Psoas muscle (tissue), 8 donors: ENCODE measurements at regions of chr10 and their contacts with region 1.

Region 1: DNA sequence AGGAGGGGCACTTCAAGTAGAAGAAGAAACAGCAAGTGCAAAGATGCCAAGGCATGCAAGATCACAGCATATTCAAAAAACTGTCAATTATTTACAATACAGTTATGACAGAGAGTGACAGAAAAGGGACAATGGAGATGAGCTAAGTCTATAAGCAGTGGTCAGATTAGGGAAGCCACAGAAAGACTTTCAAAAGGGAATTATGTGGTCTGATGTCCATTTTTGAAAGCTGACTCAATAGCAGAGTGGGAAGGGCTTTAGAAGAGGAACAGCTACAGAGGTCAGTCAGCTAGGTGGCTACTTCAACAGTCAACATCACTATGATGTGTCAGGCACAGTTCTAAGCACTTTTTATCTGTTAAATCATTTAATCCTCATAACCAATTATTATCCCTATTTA is 45.2 kb upstream of the SPOCK2 start:
- DNase-seq: no peak
- ATAC-seq: peak in 2 of 4 donors; percentile 34 to 49
- H3K4me3 ChIP-seq: no peak overlapping the region
- H3K27ac ChIP-seq: peak overlapping the region; percentile 9
- H3K4me1 ChIP-seq: peaks cover 12% of the 10 kb centered on the region
- H3K27me3 ChIP-seq: no peaks in the 10 kb centered on the region
- CTCF ChIP-seq: no peak

Region 2: GRCh38 chr10:72337020-72337629 is 203.6 kb after region 1 on chr10:
- intact Hi-C with region 1: loop called (anchors 2 to 5 kb)
- DNase-seq: peak; percentile 87 to 93
- ATAC-seq: peak; percentile 15 to 59 (median 38)
- H3K4me3 ChIP-seq: no peak overlapping the region
- H3K27ac ChIP-seq: peak overlapping the region; percentile 96
- H3K4me1 ChIP-seq: peaks cover 55% of the 10 kb centered on the region
- H3K27me3 ChIP-seq: no peaks in the 10 kb centered on the region
- CTCF ChIP-seq: peak; percentile 95